AG04450 (cell line): ENCODE measurements at regions of chr10 and their contacts with region 1.

Region 1: DNA sequence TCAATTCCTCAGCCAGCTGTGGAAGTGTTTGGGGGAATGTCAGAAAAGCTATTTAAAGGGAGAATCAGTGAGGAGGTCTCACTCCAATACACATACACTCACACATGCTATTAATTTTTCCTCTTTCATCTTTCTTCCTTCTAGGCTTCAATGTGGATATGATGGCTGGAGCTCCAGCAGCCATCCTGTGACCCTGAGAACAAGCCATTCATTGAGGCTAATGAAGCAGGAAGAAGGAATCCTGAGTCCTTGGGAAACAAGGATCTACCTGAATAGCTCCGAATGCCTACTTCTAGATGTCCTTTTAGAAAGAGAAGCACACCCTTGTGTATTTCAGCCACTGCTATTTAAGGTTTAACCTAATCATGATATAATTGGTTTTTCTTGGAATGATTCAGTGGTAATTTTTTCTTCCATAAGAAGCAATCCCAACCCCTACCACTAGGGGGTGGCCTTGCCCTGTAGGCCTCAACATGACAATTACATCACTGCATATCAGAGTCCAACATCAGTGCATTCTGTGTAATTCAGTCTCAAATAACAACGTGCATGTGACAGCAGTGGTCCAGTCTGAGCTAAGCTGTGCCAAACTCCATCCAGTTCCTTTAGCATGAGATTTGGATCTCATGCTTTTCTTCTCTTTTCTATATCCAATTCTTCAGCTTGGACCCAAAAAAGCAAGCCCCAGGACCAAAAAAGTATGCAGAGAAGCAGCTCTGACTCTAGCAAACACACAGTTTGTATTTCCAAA is 85.3 kb upstream of the ANKRD1 start:
- DNase-seq: peak; percentile 43
- H3K4me3 ChIP-seq: no peak overlapping the region
- H3K27ac ChIP-seq: no peak overlapping the region
- H3K27me3 ChIP-seq: no peaks in the 10 kb centered on the region
- CTCF ChIP-seq: peak; percentile 96

Region 2: DNA sequence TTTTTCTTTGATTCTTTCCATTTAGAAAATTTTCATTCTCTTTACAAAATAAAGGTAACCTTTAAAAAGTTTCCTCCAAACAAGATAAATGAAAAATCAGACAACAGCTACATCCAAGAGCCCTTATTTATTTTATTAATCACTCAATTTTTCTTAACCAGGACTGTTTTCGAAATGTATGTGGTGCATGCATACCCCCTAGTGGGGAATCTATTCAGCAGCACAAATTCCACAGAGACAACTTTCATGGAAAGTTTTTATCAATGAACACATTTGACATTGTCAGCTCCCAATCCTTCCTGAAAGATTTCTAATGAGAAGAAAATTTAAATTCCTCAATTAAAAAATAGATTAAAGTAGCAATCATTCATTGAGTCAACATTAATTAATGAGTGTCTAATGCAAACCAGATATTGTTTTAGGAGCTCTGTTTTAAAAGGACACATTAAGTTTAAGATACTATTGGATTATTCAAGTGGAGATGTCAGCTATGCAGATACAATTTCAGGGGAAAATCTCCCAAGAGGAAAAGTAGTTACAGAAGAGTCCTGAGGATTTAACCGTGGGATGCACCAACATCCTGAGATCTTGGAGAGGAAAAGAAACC is 143.2 kb before region 1 on chr10:
- CTCF ChIA-PET with region 1: no interaction called
- POLR2A ChIA-PET with region 1: no interaction called
- DNase-seq: no peak
- H3K4me3 ChIP-seq: no peak overlapping the region
- H3K27ac ChIP-seq: no peak overlapping the region
- H3K27me3 ChIP-seq: peaks cover 17% of the 10 kb centered on the region
- CTCF ChIP-seq: peak; percentile 85

Region 3: DNA sequence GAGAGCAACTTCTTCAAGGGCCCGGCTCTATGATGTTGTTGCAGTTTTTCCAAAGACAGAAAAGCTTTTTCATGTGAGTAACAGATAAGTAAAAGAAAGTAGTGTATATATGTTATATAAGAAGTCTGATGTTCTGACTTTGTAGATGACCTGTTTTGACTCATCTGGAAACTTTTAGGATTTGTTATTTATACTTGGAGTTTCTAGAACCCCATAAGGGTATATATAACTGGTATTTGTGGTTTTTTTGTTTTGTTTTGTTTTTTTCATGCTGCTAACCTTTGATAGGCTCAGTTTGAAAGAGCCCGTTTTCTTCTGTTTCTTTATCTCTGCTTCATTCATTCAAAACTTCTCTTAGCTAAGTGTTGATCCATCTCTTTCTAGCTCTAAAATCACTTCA is 127.1 kb before region 1 on chr10:
- CTCF ChIA-PET with region 1: interaction called, 16 read pairs
- POLR2A ChIA-PET with region 1: no interaction called
- DNase-seq: no peak
- H3K4me3 ChIP-seq: no peak overlapping the region
- H3K27ac ChIP-seq: no peak overlapping the region
- H3K27me3 ChIP-seq: no peaks in the 10 kb centered on the region
- CTCF ChIP-seq: no peak

Region 4: DNA sequence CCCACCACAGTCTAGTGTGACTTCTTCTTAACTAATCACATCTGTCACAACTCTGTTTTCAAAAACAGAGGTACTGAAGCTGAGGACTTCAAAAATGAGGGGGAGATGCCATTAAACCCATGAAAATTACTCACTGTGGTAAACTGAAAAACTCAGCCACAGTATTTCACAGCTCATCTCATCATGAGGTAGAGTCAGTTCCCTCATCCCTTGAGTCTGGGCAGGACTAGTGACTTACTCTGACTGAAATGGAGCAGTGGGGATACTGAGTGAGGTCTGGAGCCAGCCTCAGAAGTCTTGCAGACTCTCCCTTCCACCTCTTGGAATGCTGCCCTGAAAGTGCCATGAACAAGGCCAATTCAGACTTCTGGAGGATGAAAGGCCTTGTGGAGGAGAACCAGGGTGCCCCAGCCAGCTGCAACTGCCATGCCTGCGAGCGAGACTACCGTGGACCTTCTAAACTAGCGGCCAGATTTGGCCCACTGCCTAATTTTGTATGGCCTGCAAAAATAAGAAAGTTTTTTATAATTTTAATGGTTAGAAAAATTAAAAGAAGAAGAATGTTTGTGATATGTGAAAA is 60.6 kb before region 1 on chr10:
- CTCF ChIA-PET with region 1: interaction called, 13 read pairs
- POLR2A ChIA-PET with region 1: no interaction called
- DNase-seq: no peak
- H3K4me3 ChIP-seq: no peak overlapping the region
- H3K27ac ChIP-seq: no peak overlapping the region
- H3K27me3 ChIP-seq: no peaks in the 10 kb centered on the region
- CTCF ChIP-seq: no peak

Region 5: GRCh38 chr10:90977162-90977854 is 28.9 kb before region 1 on chr10:
- CTCF ChIA-PET with region 1: interaction called, 11 read pairs
- POLR2A ChIA-PET with region 1: no interaction called
- DNase-seq: no peak
- H3K4me3 ChIP-seq: no peak overlapping the region
- H3K27ac ChIP-seq: no peak overlapping the region
- H3K27me3 ChIP-seq: no peaks in the 10 kb centered on the region
- CTCF ChIP-seq: no peak

Region 6: GRCh38 chr10:91017198-91017597 is 11.0 kb after region 1 on chr10:
- CTCF ChIA-PET with region 1: interaction called, 34 read pairs
- POLR2A ChIA-PET with region 1: no interaction called
- DNase-seq: no peak
- H3K4me3 ChIP-seq: no peak overlapping the region
- H3K27ac ChIP-seq: no peak overlapping the region
- H3K27me3 ChIP-seq: peaks cover under 1% of the 10 kb centered on the region
- CTCF ChIP-seq: no peak

Region 7: DNA sequence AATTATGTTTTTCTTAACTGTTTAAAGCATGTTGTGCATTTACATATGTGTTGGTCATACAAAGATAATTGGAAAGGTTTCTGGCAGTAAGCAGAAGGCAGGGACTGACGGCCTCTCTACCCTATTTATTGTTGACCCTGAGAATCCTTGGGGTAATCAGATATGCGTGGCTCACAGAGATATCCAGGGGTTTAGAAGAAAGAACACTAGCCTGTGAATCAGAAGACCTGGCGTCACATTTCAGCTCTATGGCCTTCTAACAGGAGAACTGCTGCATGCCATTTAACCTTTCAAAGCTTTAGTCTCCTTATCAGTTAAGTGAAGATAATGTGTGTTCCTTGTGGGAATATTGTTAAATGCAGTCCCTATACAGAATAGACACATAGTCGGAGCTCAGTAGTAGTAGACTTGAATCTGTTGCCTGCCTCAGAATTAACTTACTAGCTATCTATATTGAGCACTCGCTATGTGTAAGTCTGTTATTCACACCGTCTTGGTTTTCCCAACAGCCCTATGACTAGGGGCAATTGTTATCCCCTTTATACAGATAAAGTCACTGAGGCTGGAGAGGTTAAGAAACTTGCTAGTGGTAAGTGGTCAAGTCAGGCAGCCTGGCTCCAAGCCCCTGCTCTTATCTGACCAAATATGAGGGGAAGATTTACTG is 44.3 kb after region 1 on chr10:
- CTCF ChIA-PET with region 1: interaction called, 11 read pairs
- POLR2A ChIA-PET with region 1: no interaction called
- DNase-seq: no peak
- H3K4me3 ChIP-seq: no peak overlapping the region
- H3K27ac ChIP-seq: no peak overlapping the region
- H3K27me3 ChIP-seq: peaks cover 5% of the 10 kb centered on the region
- CTCF ChIP-seq: no peak

Region 8: DNA sequence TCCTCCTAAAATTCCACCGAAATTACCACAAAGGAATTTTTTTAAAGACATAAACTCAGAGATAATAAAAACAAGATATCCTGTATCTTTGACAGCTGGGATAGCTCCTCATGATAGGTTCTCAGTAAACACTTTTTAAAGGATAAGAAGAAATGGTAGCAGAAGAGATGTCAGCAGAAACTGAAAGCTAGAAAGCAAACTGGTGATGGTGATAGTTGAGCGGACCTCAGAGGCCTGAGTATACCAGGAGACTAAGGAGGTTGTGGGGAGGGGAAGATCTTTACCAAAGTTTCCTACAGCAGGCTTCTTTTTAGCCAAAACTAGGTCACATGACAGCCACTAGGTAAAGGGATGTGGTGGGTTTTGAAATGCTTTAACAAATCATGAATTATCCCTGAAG is 236.8 kb after region 1 on chr10:
- CTCF ChIA-PET with region 1: interaction called, 169 read pairs
- POLR2A ChIA-PET with region 1: no interaction called
- DNase-seq: no peak
- H3K4me3 ChIP-seq: no peak overlapping the region
- H3K27ac ChIP-seq: no peak overlapping the region
- H3K27me3 ChIP-seq: no peaks in the 10 kb centered on the region
- CTCF ChIP-seq: no peak